ENCODE measurements at regions of chr20 and their contacts with region 1.

Region 1: GRCh38 chr20:24992487-24993205 is at the start of gene APMAP:
- DNase-seq: peak; percentile 98
- ATAC-seq: peak; percentile 95
- H3K4me3 Mint-ChIP-seq: peak within 1 kb of the TSS; percentile 97
- H3K27ac Mint-ChIP-seq: peak within 1 kb of the TSS; percentile 91
- H3K4me1 Mint-ChIP-seq: peaks cover 48% of the 10 kb centered on the region
- H3K27me3 Mint-ChIP-seq: no peaks in the 10 kb centered on the region
- total RNA-seq, gene APMAP: 26.8 to 34.0 TPM

Region 2: DNA sequence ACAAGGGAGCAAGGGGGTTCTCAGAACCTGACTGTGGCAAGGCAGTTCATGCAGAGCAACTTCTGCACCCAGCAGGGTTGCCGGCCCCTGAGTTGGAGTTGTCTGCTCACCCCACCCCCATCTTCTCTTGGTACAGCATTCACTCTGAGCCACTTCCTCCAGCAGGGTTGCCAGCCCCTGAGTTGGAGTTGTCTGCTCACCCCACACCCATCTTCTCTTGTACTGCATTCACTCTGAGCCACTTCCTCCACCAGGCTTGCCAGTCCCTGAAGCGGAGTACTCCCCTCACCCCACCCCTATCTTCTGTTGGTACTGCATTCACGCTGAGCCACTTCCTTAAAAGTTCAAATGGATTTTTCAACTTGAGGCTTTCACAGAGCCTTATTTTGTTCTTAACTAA is 603.0 kb before region 1 on chr20:
- CTCF ChIA-PET with region 1: no interaction called
- POLR2A ChIA-PET with region 1: no interaction called
- intact Hi-C with region 1: no loop called
- DNase-seq: peak; percentile 68
- ATAC-seq: peak; percentile 99
- H3K4me3 Mint-ChIP-seq: no peak overlapping the region
- H3K27ac Mint-ChIP-seq: peak overlapping the region; percentile 34
- H3K4me1 Mint-ChIP-seq: peaks cover 32% of the 10 kb centered on the region
- H3K27me3 Mint-ChIP-seq: no peaks in the 10 kb centered on the region

Region 3: DNA sequence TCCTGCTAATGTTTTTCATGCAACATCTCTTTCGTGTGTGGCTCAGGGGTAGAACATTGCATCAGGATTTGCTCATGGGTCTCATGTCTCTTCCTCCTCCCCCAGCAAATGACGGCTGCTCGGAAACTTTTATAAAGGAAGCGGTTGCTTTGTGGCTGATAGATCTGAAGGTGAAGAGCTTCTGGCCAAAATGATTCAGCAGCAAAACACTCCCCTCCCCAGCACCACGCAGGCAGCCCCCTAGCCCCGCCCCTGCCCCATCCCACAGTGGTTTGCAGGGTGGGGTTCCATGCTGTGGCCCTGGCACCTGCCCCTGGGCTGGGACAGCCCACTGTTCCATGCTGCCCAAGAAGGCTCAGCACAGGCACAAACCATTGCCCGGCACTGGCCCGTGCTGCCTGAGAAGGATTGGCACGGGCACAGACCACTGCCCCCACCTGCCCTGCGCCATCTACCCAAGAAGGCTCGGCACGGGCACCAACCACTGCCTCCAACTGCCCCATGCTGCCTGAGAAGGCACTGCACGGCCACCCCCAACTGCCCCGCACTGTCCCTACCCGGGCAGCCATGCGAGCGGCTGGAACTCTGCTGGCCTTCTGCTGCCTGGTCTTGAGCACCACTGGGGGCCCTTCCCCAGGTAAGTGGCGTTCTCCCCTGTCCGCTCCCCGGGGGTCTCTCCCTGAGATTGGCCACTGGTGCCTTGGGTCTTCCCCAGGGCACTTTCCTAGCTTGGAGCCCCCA is 43.5 kb before region 1 on chr20 and contains the start of gene CST7:
- CTCF ChIA-PET with region 1: no interaction called
- POLR2A ChIA-PET with region 1: no interaction called
- intact Hi-C with region 1: loop called in 1 of 2 experiments (anchors 1 kb)
- DNase-seq: peak; percentile 81
- ATAC-seq: peak; percentile 93
- H3K4me3 Mint-ChIP-seq: peak within 1 kb of the TSS; percentile 59
- H3K27ac Mint-ChIP-seq: peak within 1 kb of the TSS; percentile 94
- H3K4me1 Mint-ChIP-seq: peaks cover 32% of the 10 kb centered on the region
- H3K27me3 Mint-ChIP-seq: peaks cover 2% of the 10 kb centered on the region
- total RNA-seq, gene CST7: 10.7 to 14.0 TPM

Region 4: GRCh38 chr20:25076731-25077609 is 84.3 kb after region 1 on chr20:
- CTCF ChIA-PET with region 1: interaction called, 5 read pairs
- POLR2A ChIA-PET with region 1: no interaction called
- intact Hi-C with region 1: loop called (anchors 5 kb)
- DNase-seq: peak; percentile 61
- ATAC-seq: peak; percentile 62
- H3K4me3 Mint-ChIP-seq: peak overlapping the region; percentile 32
- H3K27ac Mint-ChIP-seq: no peak overlapping the region
- H3K4me1 Mint-ChIP-seq: peaks cover 14% of the 10 kb centered on the region
- H3K27me3 Mint-ChIP-seq: peaks cover 59% of the 10 kb centered on the region

Region 5: GRCh38 chr20:25247956-25248785 is 255.5 kb after region 1 on chr20 and contains the start of gene PYGB:
- CTCF ChIA-PET with region 1: interaction called, 6 read pairs
- POLR2A ChIA-PET with region 1: no interaction called
- intact Hi-C with region 1: loop called (anchors 1 to 5 kb)
- DNase-seq: peak; percentile 87
- ATAC-seq: peak; percentile 88
- H3K4me3 Mint-ChIP-seq: peak within 1 kb of the TSS; percentile 88
- H3K27ac Mint-ChIP-seq: peak within 1 kb of the TSS; percentile 88
- H3K4me1 Mint-ChIP-seq: peaks cover 56% of the 10 kb centered on the region
- H3K27me3 Mint-ChIP-seq: peaks cover 3% of the 10 kb centered on the region
- total RNA-seq, gene PYGB: 18.0 to 21.1 TPM

Region 6: DNA sequence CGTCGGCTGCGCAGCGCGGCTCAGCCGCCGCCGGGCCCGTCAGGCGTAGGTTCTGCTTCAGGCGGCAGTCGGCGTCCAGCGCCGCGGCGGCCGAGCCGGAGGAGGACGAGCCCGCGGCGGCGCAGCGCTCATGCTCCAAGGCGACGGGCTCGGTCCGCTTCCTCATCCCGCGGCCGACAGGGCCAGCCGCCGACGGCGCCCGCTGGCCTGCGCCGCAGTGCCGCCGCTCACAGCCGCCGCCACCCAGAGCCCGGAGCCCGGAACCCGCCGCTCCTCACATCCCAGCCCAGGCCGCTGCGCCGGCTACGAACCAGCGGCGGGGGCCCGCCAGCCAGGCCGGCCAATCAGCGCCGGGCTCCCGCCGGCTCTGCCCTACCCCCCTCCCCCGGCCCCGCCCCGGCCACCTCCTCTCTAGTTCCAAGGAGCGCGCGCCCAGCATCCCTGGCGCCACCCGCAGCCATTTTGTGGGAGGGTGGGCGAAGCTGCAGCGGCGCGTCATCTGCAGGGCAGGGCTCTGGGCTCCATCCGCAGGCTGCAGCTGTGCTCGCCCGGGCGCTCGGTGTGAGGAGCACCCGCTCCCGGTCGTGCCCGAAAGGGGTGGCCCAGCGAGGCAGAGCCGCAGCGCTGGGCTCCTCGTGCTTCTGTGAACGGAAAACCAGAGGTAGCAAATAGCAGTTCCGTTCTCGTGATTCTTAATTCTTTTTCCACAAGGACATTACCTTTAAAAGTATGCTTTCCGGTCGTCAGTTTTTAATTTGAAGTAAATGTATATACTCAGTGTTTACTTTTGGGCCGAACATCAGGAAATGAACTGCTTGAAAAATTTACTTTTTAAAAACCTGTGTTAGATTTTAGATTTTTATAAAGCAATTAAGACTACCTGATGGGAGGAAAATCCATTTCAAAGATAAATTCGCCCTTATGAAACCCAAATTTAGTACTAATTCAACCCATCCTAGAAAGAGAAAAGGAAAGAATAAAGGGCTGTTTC is 398.2 kb after region 1 on chr20 and contains the start of gene ABHD12:
- CTCF ChIA-PET with region 1: no interaction called
- POLR2A ChIA-PET with region 1: no interaction called
- intact Hi-C with region 1: loop called (anchors 1 to 5 kb)
- DNase-seq: peak; percentile 98
- ATAC-seq: peak; percentile 97
- H3K4me3 Mint-ChIP-seq: peak within 1 kb of the TSS; percentile 79
- H3K27ac Mint-ChIP-seq: peak within 1 kb of the TSS; percentile 84
- H3K4me1 Mint-ChIP-seq: peaks cover 12% of the 10 kb centered on the region
- H3K27me3 Mint-ChIP-seq: no peaks in the 10 kb centered on the region
- total RNA-seq, gene ABHD12: 17.4 to 18.7 TPM

Region 7: GRCh38 chr20:25584905-25585704 is 592.5 kb after region 1 on chr20 and contains the start of gene NINL:
- CTCF ChIA-PET with region 1: no interaction called
- POLR2A ChIA-PET with region 1: no interaction called
- intact Hi-C with region 1: loop called in 1 of 2 experiments (anchors 5 kb)
- DNase-seq: peak; percentile 69
- ATAC-seq: peak; percentile 82
- H3K4me3 Mint-ChIP-seq: peak within 1 kb of the TSS; percentile 73
- H3K27ac Mint-ChIP-seq: peak within 1 kb of the TSS; percentile 81
- H3K4me1 Mint-ChIP-seq: peaks cover 15% of the 10 kb centered on the region
- H3K27me3 Mint-ChIP-seq: peaks cover 9% of the 10 kb centered on the region
- total RNA-seq, gene NINL: 3.3 to 4.1 TPM

Measured in activated CD4-positive, alpha-beta T cell treated with anti-CD3 and anti-CD28 coated beads for 36 hours (primary cell).